ENCODE measurements at regions of chr12 and their contacts with region 1.

Region 1: DNA sequence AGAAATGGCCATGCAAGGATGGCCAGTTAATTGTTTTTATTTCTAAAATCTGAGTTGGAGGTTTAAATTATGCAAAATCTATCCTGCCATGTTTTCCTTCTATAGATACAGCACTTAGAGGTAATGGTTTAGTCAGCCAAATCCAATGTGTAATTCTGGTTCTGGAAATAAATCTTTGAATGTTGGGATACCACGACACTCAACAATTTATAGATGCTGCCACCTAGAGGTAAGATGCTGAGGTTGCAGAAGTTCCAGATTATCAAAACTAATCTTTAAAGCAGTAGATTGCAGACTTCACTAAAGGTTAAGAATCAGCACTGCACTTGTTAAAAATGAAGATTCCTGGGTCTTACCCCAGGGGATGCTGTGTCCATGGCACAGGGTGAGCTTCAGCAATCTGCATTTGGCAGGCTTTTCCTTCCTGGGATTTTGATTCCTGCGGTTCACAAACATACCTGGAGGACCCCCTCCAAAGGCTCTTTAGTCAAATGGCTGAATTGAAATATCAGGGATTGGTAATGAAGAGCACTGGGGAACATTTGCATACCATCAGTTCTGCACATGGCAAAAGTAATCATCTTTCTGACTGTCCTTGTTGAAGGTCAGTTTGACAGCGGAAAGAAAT is 53.4 kb upstream of the ANO4 start:
- DNase-seq: no peak
- ATAC-seq: no peak
- H3K4me3 Mint-ChIP-seq: no peak overlapping the region
- H3K27ac Mint-ChIP-seq: no peak overlapping the region
- H3K4me1 Mint-ChIP-seq: no peaks in the 10 kb centered on the region
- H3K27me3 Mint-ChIP-seq: no peaks in the 10 kb centered on the region
- CTCF ChIP-seq: peak; percentile 39

Region 2: DNA sequence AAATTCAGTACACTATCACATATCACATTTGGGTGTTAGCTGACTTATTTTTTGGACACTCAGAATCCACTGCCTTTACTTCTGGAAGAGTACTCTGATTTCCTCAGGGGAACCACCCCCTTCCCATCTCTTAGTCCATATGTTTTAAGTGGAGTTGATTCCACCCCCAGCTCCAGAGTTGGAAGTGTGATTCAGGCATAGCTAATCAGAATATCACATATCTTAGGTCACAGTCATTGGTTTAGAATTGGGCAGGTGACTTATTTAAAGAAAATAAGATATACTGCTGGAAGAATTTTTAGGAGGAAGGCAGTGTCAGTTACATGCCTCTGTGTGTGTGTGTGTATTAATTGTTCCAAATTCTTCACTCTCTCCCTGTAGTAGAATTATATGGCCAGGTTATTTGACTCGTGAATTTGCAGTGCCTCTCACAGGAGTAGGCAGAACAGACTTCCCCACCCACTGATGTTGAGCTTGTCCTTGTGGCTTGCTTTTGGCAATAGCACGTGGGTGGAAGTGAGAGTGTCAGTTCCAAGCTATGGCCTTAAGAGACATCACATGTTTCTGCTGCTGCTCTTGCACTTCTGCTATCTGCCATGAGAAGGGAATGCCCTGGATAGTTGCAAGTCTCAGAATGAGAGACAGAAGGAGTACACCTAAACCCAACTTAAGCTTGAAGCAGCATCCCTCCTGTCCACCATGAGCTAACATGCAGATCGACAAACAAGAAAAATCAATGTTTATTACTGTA is 174.1 kb before region 1 on chr12:
- CTCF ChIA-PET with region 1: no interaction called
- POLR2A ChIA-PET with region 1: no interaction called
- intact Hi-C with region 1: no loop called
- DNase-seq: no peak
- ATAC-seq: peak; percentile 27
- H3K4me3 Mint-ChIP-seq: no peak overlapping the region
- H3K27ac Mint-ChIP-seq: no peak overlapping the region
- H3K4me1 Mint-ChIP-seq: peaks cover 3% of the 10 kb centered on the region
- H3K27me3 Mint-ChIP-seq: peaks cover 20% of the 10 kb centered on the region
- CTCF ChIP-seq: no peak

Region 3: GRCh38 chr12:100601626-100602025 is 139.6 kb before region 1 on chr12:
- CTCF ChIA-PET with region 1: no interaction called
- POLR2A ChIA-PET with region 1: no interaction called
- intact Hi-C with region 1: no loop called
- DNase-seq: no peak
- ATAC-seq: no peak
- H3K4me3 Mint-ChIP-seq: no peak overlapping the region
- H3K27ac Mint-ChIP-seq: no peak overlapping the region
- H3K4me1 Mint-ChIP-seq: no peaks in the 10 kb centered on the region
- H3K27me3 Mint-ChIP-seq: no peaks in the 10 kb centered on the region
- CTCF ChIP-seq: no peak

Region 4: GRCh38 chr12:100753837-100754236 is 12.6 kb after region 1 on chr12:
- CTCF ChIA-PET with region 1: interaction called, 11 read pairs
- POLR2A ChIA-PET with region 1: no interaction called
- intact Hi-C with region 1: no loop called
- DNase-seq: no peak
- ATAC-seq: no peak
- H3K4me3 Mint-ChIP-seq: no peak overlapping the region
- H3K27ac Mint-ChIP-seq: no peak overlapping the region
- H3K4me1 Mint-ChIP-seq: no peaks in the 10 kb centered on the region
- H3K27me3 Mint-ChIP-seq: no peaks in the 10 kb centered on the region
- CTCF ChIP-seq: no peak

Measured in activated CD8-positive, alpha-beta T cell treated with anti-CD3 and anti-CD28 coated beads for 36 hours (primary cell).